ENCODE measurements at regions of chrX and their contacts with region 1.

Region 1: DNA sequence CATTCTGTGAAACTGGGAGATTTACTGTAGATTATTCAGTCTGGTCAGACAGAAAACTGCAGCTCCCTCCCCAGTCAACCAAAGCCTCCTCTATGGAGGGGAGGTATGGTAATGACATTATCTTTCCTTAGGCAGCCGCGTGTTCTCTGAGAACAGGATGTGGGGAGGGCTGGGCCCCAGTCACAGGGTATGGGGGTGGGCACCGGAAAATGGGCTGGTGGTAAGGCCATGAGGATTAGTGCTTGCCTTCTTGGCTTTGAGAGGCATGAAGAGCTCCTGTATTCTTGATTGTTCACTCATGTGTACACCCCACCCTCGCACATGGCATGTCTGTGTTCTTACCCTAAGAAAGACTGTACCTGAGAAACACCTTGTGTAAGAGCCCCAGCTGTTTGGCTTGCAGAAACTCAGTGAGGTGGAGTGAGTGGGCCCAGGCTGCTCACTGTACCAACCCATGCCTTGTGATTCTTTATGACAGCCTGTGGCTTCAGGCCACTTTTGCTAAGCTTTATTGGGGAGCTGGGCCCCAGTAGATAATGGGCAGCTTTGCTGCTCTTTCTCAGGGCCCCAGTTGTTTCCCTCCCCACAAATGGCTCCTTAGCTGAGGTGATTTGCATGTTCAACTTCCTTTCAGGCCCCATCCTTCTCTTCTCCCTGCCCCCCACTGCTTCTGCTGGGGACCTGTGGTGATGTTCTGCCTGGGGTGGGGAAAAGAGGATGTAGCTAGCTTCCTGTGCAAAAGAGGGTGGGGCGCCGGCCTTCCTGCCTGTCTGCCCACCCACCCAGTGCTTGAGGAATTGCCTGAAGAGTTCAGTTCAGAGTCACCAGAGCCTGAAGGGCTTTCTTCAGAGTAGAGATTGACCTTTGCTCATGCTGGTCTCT is 30.7 kb downstream of the MSN start:
- DNase-seq: peak; percentile 69
- ATAC-seq: peak; percentile 78
- H3K4me3 Mint-ChIP-seq: peak overlapping the region; percentile 88
- H3K27ac Mint-ChIP-seq: peak overlapping the region; percentile 95
- H3K4me1 Mint-ChIP-seq: peaks cover 71% of the 10 kb centered on the region
- H3K27me3 Mint-ChIP-seq: no peaks in the 10 kb centered on the region

Region 2: DNA sequence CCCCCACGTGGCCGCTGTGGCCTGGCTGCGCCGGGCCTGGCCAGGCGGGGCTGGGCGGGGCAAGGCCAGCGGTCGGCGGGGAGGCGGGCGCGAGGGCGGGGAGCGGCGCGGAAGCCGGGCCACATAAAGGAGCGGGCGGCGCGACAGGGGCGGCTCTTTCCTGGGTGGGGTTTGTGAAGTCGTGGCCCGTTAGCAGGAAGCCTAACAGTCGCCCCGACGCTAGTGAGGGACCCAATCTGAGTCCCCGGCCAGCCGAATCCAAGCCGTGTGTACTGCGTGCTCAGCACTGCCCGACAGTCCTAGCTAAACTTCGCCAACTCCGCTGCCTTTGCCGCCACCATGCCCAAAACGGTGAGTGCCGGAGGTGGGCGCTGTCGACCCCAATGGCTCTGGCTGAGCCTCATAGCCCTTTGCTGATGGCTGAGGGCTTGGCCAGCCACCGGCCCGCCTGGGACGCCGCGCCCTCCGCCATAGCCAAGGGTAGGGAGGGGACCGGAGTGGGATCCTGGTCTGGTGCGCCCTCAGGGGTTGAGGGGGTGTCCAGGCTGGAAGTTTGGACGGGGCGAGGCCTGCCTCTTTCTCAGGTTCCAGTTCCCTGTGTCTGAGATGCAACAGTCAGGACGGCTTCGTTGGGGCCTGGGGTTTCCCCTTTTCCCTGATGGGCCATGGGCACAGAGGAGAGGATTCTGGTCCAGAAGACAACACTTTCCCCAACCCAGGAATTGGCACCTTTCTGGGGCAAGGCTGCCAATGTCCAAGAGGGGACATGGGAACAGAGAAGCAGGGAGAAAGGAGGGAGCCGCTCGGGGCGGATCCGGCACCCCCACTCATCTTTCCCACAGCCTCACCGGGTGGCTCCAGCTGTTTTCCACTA is 30.4 kb before region 1 on chrX and contains the start of gene MSN:
- POLR2A ChIA-PET with region 1: interaction called, 21 read pairs
- DNase-seq: peak; percentile 83
- ATAC-seq: peak; percentile 82
- H3K4me3 Mint-ChIP-seq: peak within 1 kb of the TSS; percentile 94
- H3K27ac Mint-ChIP-seq: peak within 1 kb of the TSS; percentile 93
- H3K4me1 Mint-ChIP-seq: peaks cover 28% of the 10 kb centered on the region
- H3K27me3 Mint-ChIP-seq: no peaks in the 10 kb centered on the region
- total RNA-seq, gene MSN: 483 to 487 TPM

Region 3: DNA sequence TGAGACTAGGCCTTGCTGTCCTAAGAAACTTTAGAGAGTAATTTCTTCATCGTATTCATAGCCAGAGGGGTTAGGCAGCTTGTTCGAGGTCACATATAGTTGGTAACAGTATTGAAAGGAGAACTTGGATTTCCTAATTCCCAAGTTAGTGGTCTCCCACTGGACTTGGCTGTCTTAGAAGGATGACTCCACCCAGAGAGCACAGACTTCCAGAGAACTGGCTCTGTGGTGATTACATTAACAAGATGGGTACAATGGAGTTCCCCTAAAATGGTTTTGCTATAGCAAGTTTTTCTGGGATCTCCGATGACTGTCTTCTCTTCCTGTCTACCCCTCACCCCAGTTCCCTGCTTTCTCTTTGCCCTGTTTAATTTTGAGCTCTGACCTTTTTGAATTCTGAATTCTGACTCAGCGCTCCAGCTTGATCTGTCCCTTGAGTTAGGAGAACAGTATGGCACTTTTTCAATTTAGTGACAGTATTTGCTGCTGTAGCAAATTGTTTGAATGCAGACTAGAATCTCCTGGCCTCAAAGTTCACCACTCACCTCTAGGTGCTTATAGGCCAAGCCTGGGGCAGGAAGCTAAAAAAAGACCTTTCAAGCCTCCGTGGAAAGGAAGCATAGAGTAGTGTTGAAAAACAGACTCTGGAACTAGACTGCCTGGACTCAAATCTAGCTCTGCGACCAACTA is 23.8 kb before region 1 on chrX:
- POLR2A ChIA-PET with region 1: interaction called, 10 read pairs
- DNase-seq: no peak
- ATAC-seq: peak; percentile 75
- H3K4me3 Mint-ChIP-seq: peak overlapping the region; percentile 94
- H3K27ac Mint-ChIP-seq: peak overlapping the region; percentile 93
- H3K4me1 Mint-ChIP-seq: peaks cover 64% of the 10 kb centered on the region
- H3K27me3 Mint-ChIP-seq: no peaks in the 10 kb centered on the region